ENCODE measurements at regions of chr9 and their contacts with region 1.

Region 1: GRCh38 chr9:133144137-133144903 is 19.4 kb downstream of the GBGT1 start:
- DNase-seq: peak; percentile 98
- H3K4me3 Mint-ChIP-seq: peak overlapping the region; percentile 67
- H3K27ac Mint-ChIP-seq: peak overlapping the region; percentile 88
- H3K4me1 Mint-ChIP-seq: peaks cover 70% of the 10 kb centered on the region
- H3K27me3 Mint-ChIP-seq: no peaks in the 10 kb centered on the region

Region 2: GRCh38 chr9:133023117-133023890 is 121.0 kb before region 1 on chr9:
- CTCF ChIA-PET with region 1: interaction called, 38 read pairs
- POLR2A ChIA-PET with region 1: no interaction called
- intact Hi-C with region 1: loop called (anchors 1 kb)
- DNase-seq: peak; percentile 71
- H3K4me3 Mint-ChIP-seq: peak overlapping the region; percentile 8
- H3K27ac Mint-ChIP-seq: no peak overlapping the region
- H3K4me1 Mint-ChIP-seq: peaks cover 12% of the 10 kb centered on the region
- H3K27me3 Mint-ChIP-seq: no peaks in the 10 kb centered on the region

Region 3: GRCh38 chr9:133042676-133043075 is 101.6 kb before region 1 on chr9:
- CTCF ChIA-PET with region 1: interaction called, 18 read pairs
- POLR2A ChIA-PET with region 1: no interaction called
- intact Hi-C with region 1: loop called (anchors 1 kb)
- DNase-seq: no peak
- H3K4me3 Mint-ChIP-seq: no peak overlapping the region
- H3K27ac Mint-ChIP-seq: no peak overlapping the region
- H3K4me1 Mint-ChIP-seq: peaks cover 10% of the 10 kb centered on the region
- H3K27me3 Mint-ChIP-seq: no peaks in the 10 kb centered on the region

Region 4: DNA sequence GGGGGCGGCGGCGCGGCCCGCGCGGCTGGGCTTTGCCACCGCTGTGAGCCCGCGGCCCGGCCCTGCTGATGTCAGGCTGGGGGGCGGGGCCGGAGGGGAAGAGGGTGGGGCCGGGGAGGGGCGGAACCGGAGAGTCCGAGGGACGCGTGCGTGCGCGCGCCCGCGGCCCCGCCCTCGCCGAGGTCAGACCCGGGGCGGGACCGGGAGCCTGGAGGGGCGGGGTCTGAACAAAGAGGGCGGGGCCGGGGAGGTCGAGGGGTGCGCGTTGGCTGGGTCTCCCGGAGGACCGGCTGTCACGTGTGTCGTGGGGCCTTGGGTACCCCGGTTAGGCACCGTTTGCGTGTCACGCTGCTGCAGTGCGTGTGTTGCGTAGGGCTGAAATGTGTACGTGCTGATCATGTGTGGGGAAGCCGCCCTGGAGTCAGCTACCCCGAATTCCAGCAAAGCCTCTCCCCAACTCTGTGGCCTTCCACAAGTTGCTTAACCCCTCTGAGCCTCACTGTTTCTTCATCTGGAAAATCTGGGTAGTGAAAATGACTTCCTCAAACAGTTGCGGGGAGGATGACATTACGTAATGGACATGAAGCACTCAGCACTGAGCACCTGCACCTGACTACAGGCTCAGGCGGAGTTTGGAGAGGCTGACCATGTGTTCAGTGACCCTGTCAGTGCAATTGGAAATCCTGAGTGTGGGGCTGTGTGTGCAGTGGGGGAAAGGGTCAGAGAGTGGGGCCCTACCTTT is 23.0 kb before region 1 on chr9 and contains the start of gene RALGDS:
- CTCF ChIA-PET with region 1: interaction called, 552 read pairs
- POLR2A ChIA-PET with region 1: interaction called, 7 read pairs
- intact Hi-C with region 1: loop called (anchors 1 kb)
- DNase-seq: peak; percentile 93
- H3K4me3 Mint-ChIP-seq: peak within 1 kb of the TSS; percentile 77
- H3K27ac Mint-ChIP-seq: peak within 1 kb of the TSS; percentile 85
- H3K4me1 Mint-ChIP-seq: peaks cover 68% of the 10 kb centered on the region
- H3K27me3 Mint-ChIP-seq: no peaks in the 10 kb centered on the region
- total RNA-seq, gene RALGDS: 65.4 TPM

Region 5: DNA sequence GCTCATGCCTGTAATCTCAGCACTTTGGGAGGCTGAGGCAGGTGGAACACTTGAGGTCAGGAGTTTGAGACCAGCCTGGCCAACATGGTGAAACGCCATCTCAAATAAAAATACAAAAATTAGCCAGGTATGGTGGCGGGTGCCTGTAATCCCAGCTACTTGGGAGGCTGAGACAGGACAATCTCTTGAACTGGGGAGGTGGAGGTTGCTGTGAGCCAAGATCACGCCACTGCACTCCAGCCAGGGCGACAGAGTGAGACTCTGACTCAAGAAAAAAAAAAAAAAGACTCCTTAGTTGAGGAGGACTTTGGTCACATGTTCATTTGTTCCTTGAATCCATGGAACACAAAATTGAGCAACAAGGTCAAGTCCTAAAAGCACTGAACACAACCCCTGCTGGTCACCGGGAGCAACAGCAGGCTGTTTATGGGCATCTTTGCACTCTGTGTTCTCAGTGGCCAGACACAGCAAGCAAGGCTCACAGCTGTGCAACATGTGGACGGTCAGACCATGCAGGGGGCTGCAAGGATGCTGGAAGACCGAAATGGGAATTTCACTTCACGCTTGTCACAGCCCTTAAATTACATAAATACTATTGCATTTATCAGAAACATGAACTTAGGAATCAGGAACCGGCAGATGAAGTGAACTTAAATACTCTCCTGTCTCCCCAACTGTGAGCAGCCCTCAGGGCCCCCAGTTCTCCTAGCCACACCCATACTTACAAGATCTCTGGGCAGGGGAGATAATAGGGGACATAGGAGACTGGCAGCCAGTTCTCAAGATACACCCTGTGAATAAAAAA is 16.6 kb after region 1 on chr9:
- CTCF ChIA-PET with region 1: interaction called, 14 read pairs
- POLR2A ChIA-PET with region 1: no interaction called
- intact Hi-C with region 1: no loop called
- DNase-seq: peak; percentile 56
- H3K4me3 Mint-ChIP-seq: no peak overlapping the region
- H3K27ac Mint-ChIP-seq: no peak overlapping the region
- H3K4me1 Mint-ChIP-seq: peaks cover 2% of the 10 kb centered on the region
- H3K27me3 Mint-ChIP-seq: no peaks in the 10 kb centered on the region